Dorsolateral prefrontal cortex (tissue), 120 donors: ENCODE measurements at regions of chr18 and their contacts with region 1.

Region 1: GRCh38 chr18:24543805-24544498 is 83.5 kb downstream of the HRH4 start:
- DNase-seq: peak in 1 of 10 donors; percentile 48
- H3K4me3 ChIP-seq: peak overlapping the region in 10 of 59 donors; percentile 3 to 41 (median 14)
- H3K27ac ChIP-seq: peak overlapping the region in 34 of 59 donors; percentile 0 to 87 (median 51)
- H3K27me3 ChIP-seq: no peaks in the 10 kb centered on the region
- CTCF ChIP-seq: peak in 55 of 56 donors; percentile 30 to 77 (median 59)

Region 2: DNA sequence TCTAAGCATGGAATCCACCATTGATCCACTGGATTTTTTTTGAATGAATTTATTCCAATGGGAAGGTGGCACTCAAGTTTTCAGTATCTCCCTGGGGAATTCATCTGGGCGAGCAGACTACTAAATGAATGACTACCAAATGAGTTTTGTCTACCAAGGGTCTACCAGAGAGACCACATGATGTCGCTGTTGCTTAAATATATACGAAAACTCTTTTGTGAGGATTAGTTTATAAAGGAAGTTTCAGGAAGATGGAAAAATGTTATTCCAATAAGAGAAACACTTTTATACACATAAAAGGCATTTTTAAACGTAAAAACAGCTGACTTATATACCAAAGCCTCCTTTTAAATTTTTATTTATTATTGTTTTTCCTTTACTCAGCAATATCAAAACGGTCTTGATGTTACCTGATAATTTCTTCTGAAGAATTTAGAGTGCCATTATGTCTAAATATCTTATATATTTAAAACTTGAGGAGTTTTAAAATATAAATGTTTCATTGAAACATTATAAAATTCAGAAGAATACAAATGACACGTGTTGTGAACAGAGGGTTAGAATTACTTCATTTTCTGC is 56.2 kb after region 1 on chr18:
- intact Hi-C with region 1: loop called in 1 of 2 experiments (anchors 10 kb)
- DNase-seq: peak in 1 of 10 donors; percentile 28
- H3K4me3 ChIP-seq: no peak overlapping the region
- H3K27ac ChIP-seq: no peak overlapping the region
- H3K27me3 ChIP-seq: peaks cover 0 to 9% (median 0%) of the 10 kb centered on the region in 45 donors
- CTCF ChIP-seq: peak; percentile 44 to 87 (median 72)

Region 3: GRCh38 chr18:25832001-25832604 is 1288.2 kb after region 1 on chr18:
- intact Hi-C with region 1: loop called in 1 of 2 experiments (anchors 10 kb)
- DNase-seq: peak in 8 of 10 donors; percentile 37 to 73 (median 50)
- H3K4me3 ChIP-seq: no peak overlapping the region
- H3K27ac ChIP-seq: no peak overlapping the region
- H3K27me3 ChIP-seq: peaks cover 0 to 2% (median 0%) of the 10 kb centered on the region in 45 donors
- CTCF ChIP-seq: peak; percentile 27 to 83 (median 70)